Vagina (tissue), 2 donors: ENCODE measurements at regions of chr5 and their contacts with region 1.

Region 1: GRCh38 chr5:71882826-71883744 is 164.0 kb downstream of the CARTPT start:
- DNase-seq: peak in 1 of 2 donors; percentile 70
- H3K4me3 ChIP-seq: no peak overlapping the region
- H3K27ac ChIP-seq: no peak overlapping the region
- H3K4me1 ChIP-seq: peaks cover 11% of the 10 kb centered on the region
- H3K27me3 ChIP-seq: no peaks in the 10 kb centered on the region
- CTCF ChIP-seq: no peak
- POLR2A ChIP-seq: no peak

Region 2: GRCh38 chr5:72378636-72379290 is 495.7 kb after region 1 on chr5:
- intact Hi-C with region 1: loop called (anchors 5 kb)
- DNase-seq: no peak
- H3K4me3 ChIP-seq: no peak overlapping the region
- H3K27ac ChIP-seq: no peak overlapping the region
- H3K4me1 ChIP-seq: peaks cover 11% of the 10 kb centered on the region
- H3K27me3 ChIP-seq: no peaks in the 10 kb centered on the region
- CTCF ChIP-seq: no peak
- POLR2A ChIP-seq: no peak